ENCODE measurements at regions of chr5 and their contacts with region 1.

Region 1: DNA sequence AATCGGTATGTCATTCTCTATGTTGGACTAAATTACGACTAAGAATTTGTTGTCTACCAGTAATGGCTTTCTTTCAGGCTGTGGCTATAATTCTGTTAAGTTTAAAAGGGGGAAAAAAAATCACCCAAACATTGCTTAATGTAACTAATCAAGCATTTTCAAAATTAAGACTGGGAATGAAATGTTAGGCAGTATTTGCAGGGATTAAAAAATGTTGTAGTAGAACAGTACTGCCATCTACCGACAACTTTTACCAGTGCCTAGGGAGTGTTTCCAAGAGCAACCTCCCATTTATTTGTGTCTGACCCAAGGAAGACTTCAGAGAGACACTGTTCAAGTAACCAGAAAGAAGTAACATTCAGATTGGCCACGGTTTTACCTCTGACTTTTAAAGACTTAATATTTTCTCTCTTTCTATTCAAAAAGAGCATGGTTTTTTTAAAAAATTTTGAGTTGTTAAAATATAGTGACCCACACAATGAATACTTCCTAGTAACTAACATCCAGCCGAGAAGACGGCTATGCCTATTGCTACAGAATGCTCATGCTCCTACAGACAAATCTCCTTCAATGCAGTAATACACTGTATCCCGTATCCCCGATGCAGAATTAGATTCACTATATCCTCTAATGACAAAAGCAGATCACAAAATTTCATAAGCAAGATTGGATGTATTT is 92.4 kb downstream of the ARL15 start:
- DNase-seq: no peak
- H3K4me3 Mint-ChIP-seq: no peak overlapping the region
- H3K27ac Mint-ChIP-seq: no peak overlapping the region
- H3K4me1 Mint-ChIP-seq: no peaks in the 10 kb centered on the region
- H3K27me3 Mint-ChIP-seq: no peaks in the 10 kb centered on the region

Region 2: GRCh38 chr5:52856564-52856963 is 1361.4 kb before region 1 on chr5:
- intact Hi-C with region 1: no loop called
- DNase-seq: no peak
- H3K4me3 Mint-ChIP-seq: no peak overlapping the region
- H3K27ac Mint-ChIP-seq: no peak overlapping the region
- H3K4me1 Mint-ChIP-seq: peaks cover 6% of the 10 kb centered on the region
- H3K27me3 Mint-ChIP-seq: no peaks in the 10 kb centered on the region

Region 3: GRCh38 chr5:53425598-53426511 is 792.1 kb before region 1 on chr5:
- intact Hi-C with region 1: loop called (anchors 5 kb)
- DNase-seq: no peak
- H3K4me3 Mint-ChIP-seq: no peak overlapping the region
- H3K27ac Mint-ChIP-seq: no peak overlapping the region
- H3K4me1 Mint-ChIP-seq: no peaks in the 10 kb centered on the region
- H3K27me3 Mint-ChIP-seq: peaks cover 21% of the 10 kb centered on the region